ENCODE measurements at regions of chrX and their contacts with region 1.

Region 1: GRCh38 chrX:132609394-132609793 is 120.6 kb upstream of the MBNL3 start:
- DNase-seq: no peak
- H3K4me3 ChIP-seq: no peak overlapping the region
- H3K27ac ChIP-seq: no peak overlapping the region
- H3K4me1 ChIP-seq: no peaks in the 10 kb centered on the region
- H3K27me3 ChIP-seq: no peaks in the 10 kb centered on the region
- CTCF ChIP-seq: no peak
- EP300 ChIP-seq: no peak
- POLR2A ChIP-seq: no peak

Region 2: GRCh38 chrX:132292793-132293192 is 316.6 kb before region 1 on chrX:
- in situ Hi-C with region 1: loop called (anchors 10 to 25 kb)
- intact Hi-C with region 1: no loop called
- DNase-seq: peak; percentile 12
- H3K4me3 ChIP-seq: no peak overlapping the region
- H3K27ac ChIP-seq: no peak overlapping the region
- H3K4me1 ChIP-seq: no peaks in the 10 kb centered on the region
- H3K27me3 ChIP-seq: no peaks in the 10 kb centered on the region
- CTCF ChIP-seq: peak; percentile 43 to 70 (median 53)
- EP300 ChIP-seq: no peak
- POLR2A ChIP-seq: no peak

Measured in transverse colon (tissue), 4 donors.